GM10248 (cell line): ENCODE measurements at regions of chr11 and their contacts with region 1.

Region 1: GRCh38 chr11:84564180-84564866 is 1062.8 kb downstream of the DLG2 start:
- DNase-seq: peak; percentile 34
- CTCF ChIP-seq: peak; percentile 76

Region 2: DNA sequence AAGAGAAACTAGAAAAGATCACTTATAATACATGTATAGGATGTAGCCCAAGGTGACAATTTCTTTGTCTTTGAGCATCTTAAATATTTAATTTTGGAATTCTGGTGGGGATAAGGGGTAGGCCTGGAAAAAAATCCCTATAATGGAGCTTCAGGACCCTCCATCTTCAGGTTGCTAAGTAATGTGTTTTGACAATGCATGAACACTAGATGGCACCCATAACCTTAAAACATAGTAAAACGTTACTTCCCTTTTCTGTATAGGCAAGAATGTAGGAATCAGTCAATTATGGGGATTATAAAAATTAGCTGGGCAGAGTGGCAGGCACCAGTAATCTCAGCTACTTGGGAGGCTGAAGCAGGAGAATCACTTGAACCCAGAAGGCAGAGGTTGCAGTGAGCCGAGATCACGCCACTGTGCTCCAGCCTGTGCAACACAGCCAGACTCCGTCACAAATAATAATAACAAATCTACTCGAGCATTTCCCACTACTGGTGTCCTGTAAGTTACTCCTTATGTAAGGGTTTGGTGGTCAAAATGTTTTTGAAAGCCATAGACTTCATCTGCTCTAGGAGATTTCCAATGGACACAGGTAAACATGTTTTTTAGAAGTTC is 736.3 kb before region 1 on chr11:
- CTCF ChIA-PET with region 1: interaction called, 13 read pairs
- POLR2A ChIA-PET with region 1: no interaction called
- DNase-seq: peak; percentile 33
- CTCF ChIP-seq: peak; percentile 64

Region 3: GRCh38 chr11:83836883-83837654 is 727.3 kb before region 1 on chr11:
- CTCF ChIA-PET with region 1: interaction called, 35 read pairs
- POLR2A ChIA-PET with region 1: no interaction called
- DNase-seq: peak; percentile 49
- CTCF ChIP-seq: peak; percentile 58

Region 4: GRCh38 chr11:84316866-84317555 is 247.3 kb before region 1 on chr11:
- CTCF ChIA-PET with region 1: no interaction called
- POLR2A ChIA-PET with region 1: no interaction called
- DNase-seq: no peak
- CTCF ChIP-seq: no peak

Region 5: DNA sequence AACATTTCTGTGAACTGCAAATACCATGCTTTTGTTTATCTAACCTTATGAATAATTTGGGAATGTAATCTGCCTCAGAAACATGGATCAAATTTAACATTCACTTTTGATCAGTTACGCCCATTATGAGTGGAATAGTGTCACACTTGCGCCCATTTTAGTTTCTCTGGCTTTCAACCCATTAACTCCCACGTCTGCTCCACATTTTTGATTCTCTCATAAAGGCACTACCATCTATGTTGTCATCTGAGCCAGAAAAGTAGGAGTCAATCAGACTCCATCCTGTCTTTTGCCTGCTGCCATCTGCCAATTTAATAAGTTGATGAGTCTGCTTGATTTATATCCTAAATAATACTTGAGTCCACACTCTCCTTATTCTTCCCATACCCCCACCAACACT is 27.9 kb before region 1 on chr11:
- CTCF ChIA-PET with region 1: interaction called, 11 read pairs
- POLR2A ChIA-PET with region 1: no interaction called
- DNase-seq: no peak
- CTCF ChIP-seq: no peak

Region 6: DNA sequence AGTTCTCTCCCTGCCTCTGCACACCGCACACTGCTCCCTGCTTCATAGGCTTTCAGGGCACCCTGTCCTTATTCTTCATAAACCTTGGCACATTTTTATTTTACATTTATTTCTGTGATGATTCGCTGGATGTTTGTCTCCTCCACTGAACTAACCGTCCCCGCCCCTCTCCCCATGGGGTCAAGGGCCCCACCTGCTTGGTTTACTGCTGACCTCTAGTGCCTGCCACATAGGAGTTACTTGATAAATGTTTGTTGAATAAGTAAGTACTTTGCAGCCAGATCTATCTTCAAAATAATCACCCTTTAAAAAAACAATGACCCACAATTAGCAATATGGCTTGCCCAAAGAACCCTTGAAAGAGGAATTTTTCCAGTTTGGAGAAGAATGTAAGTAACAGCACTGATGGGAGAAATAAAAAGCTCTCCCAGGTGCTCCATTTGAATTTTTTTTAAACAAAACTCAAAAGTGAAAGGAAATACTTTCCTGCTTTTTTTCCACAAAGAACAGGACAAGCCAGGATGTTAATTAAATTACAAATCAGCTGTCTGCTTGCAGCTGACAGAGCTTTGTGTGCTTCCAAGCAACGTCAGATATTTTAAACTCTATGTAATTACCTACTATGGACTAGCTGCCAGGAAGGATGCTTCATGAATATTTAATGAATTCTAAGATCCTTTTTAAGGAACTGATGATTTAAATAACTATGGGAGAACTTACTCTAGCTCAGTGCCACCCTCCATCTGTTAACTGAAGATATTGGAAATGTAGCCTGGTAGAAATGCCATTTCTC is 20.8 kb before region 1 on chr11:
- CTCF ChIA-PET with region 1: interaction called, 16 read pairs
- POLR2A ChIA-PET with region 1: no interaction called
- DNase-seq: no peak
- CTCF ChIP-seq: no peak

Region 7: DNA sequence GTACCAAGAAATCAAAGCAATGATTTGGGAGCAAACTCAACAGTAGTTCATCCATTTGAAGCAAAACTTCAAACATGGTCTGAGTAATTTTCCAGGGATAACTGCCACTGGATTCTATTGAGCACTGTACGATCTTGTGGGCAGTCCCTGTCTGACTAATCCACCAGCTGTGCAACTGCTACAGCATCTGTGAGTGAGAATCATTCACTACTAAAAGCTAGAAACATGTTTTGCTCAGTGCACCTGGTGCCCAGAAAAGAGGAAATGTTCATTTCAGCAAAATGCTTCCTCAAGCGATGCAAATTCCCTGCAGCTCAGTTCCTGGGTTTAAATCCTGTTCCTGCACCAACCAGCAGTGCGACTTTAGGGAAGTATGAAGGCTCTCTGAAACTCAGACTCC is 15.1 kb before region 1 on chr11:
- CTCF ChIA-PET with region 1: interaction called, 38 read pairs
- POLR2A ChIA-PET with region 1: no interaction called
- DNase-seq: peak; percentile 10
- CTCF ChIP-seq: no peak

Region 8: DNA sequence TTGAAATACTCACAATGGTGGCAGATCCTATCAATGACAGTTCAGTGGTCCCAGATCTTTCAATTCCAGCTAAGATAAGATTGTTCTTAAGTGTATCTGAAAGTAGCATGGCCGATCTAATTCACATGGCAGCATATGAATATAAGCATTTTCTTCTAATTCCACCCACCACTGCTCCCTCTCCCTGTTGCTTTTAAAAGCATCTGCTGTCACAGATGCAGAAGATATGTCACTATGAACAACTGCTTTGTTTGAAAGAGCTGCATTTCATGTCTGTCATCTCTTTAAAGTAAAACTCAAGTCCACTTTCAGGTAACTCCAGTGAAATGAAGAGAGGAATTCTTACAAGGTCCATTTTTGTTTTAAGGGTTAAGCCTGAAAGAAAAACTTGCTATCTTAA is 18.8 kb after region 1 on chr11:
- CTCF ChIA-PET with region 1: interaction called, 10 read pairs
- POLR2A ChIA-PET with region 1: no interaction called
- DNase-seq: no peak
- CTCF ChIP-seq: no peak